CD8-positive, alpha-beta T cell (primary cell): ENCODE measurements at regions of chr1 and their contacts with region 1.

Region 1: GRCh38 chr1:22025368-22026155 is 24.1 kb downstream of the CELA3A start:
- DNase-seq: peak; percentile 69 to 95 (median 90)
- ATAC-seq: peak; percentile 65
- H3K4me3 ChIP-seq: peak overlapping the region; percentile 97 to 99
- H3K4me3 Mint-ChIP-seq: peak overlapping the region; percentile 95
- H3K27ac ChIP-seq: peak overlapping the region; percentile 99
- H3K27ac Mint-ChIP-seq: peak overlapping the region; percentile 98
- H3K4me1 ChIP-seq: peaks cover 37% of the 10 kb centered on the region
- H3K4me1 Mint-ChIP-seq: peaks cover 60% of the 10 kb centered on the region
- H3K27me3 ChIP-seq: no peaks in the 10 kb centered on the region
- H3K27me3 Mint-ChIP-seq: no peaks in the 10 kb centered on the region
- CTCF ChIP-seq: no peak

Region 2: DNA sequence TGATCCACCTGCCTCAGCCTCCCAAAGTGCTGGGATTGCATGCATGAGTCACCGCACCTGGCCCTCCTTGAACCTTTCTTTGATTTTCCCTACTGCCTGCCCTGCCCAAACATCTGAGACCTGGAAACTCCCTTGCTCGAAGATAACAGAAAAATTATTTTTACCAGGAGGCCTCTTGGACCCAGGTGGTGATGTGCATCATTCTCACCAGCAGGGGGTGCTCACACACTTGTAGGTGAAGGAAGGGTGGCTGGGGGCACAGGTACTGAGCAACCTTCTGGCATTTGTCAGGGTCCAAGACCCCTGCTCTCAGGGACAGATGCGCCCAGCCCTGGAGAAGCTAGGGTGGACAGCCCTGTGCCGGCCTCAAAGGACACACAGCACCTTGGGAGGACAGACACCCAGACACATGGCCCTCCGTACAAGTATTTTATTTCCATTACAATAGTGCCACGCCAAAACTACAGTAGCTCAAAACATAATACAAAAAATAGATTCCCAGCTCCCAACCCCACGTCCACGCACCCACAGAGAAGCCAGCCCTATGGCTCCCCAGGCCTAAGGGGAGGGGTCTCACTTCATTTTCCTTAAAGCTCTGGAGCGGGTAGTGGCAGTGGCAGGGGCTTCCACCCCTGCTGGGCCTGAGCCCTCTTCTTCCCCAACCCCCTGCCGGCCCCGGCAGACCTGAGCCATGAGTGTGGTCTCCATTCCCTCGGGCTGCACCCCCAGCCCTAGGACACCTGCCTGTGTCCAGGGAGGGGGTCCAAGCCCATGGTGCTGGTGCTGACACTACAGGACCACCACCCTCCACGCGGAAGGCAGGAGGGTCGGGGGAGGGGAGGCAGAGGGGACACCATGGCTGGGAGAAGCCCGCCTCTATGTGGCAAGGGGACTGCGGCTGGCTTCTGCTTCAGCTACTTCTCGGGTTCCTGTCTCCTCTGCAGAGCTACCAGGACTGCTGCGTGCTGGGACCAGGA is 808.4 kb before region 1 on chr1:
- CTCF ChIA-PET with region 1: no interaction called
- POLR2A ChIA-PET with region 1: no interaction called
- intact Hi-C with region 1: no loop called
- DNase-seq: peak; percentile 26 to 79 (median 70)
- ATAC-seq: peak; percentile 78
- H3K4me3 ChIP-seq: no peak overlapping the region
- H3K4me3 Mint-ChIP-seq: no peak overlapping the region
- H3K27ac ChIP-seq: no peak overlapping the region
- H3K27ac Mint-ChIP-seq: no peak overlapping the region
- H3K4me1 ChIP-seq: no peaks in the 10 kb centered on the region
- H3K4me1 Mint-ChIP-seq: peaks cover 2% of the 10 kb centered on the region
- H3K27me3 ChIP-seq: no peaks in the 10 kb centered on the region
- H3K27me3 Mint-ChIP-seq: no peaks in the 10 kb centered on the region
- CTCF ChIP-seq: peak; percentile 75

Region 3: DNA sequence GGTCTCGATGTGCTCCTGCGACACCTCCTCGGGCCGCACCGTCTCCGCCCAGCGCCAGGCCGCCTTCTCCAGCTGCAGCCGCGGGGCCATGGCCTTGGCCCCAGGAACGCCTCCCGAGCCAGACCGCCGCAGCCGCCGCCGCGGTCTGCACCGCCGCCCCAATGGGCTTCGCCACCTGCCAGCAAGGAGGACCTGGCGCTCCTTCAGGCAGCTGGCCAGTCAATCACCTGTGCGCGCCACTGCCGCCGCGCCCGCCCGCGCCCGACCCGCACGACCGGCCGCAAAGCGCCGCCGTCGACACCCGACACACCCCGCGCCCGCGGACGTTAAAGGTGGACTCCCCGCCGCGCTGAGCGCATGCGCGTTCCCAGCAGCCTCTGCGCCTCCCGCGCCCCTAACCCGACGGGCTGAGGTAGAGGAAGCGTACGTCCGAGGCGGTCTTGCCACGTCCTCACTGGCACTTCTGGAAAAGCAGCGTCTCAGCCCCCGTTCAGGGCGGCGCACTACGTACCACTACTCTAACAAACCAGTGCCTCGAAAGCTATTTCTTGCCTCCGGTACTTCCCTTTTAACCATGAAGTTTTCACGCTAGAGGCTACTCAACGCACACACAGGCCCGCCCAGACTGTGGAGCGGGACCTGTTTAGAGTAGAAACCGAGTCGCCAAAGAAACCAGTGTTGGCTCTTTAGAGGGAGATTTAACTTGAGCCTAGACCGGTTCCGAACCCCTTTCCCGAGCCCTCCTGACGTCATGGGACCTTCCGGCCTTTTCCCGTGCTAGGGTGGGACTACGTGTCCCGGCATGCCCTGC is 242.5 kb before region 1 on chr1 and contains the start of gene USP48:
- CTCF ChIA-PET with region 1: interaction called, 3 read pairs
- POLR2A ChIA-PET with region 1: interaction called, 17 read pairs
- intact Hi-C with region 1: loop called (anchors 1 kb)
- DNase-seq: peak; percentile 93 to 98 (median 96)
- ATAC-seq: peak; percentile 83
- H3K4me3 ChIP-seq: peak within 1 kb of the TSS; percentile 89 to 100
- H3K4me3 Mint-ChIP-seq: peak within 1 kb of the TSS; percentile 98
- H3K27ac ChIP-seq: peak within 1 kb of the TSS; percentile 100
- H3K27ac Mint-ChIP-seq: peak within 1 kb of the TSS; percentile 100
- H3K4me1 ChIP-seq: peaks cover 10% of the 10 kb centered on the region
- H3K4me1 Mint-ChIP-seq: peaks cover 31% of the 10 kb centered on the region
- H3K27me3 ChIP-seq: no peaks in the 10 kb centered on the region
- H3K27me3 Mint-ChIP-seq: no peaks in the 10 kb centered on the region
- CTCF ChIP-seq: no peak
- total RNA-seq, gene USP48: 58.7 to 68.3 TPM

Region 4: GRCh38 chr1:22039594-22040285 is 14.2 kb after region 1 on chr1:
- CTCF ChIA-PET with region 1: interaction called, 65 read pairs
- POLR2A ChIA-PET with region 1: interaction called, 108 read pairs
- intact Hi-C with region 1: loop called (anchors 1 kb)
- DNase-seq: peak; percentile 80 to 99 (median 90)
- ATAC-seq: peak; percentile 94
- H3K4me3 ChIP-seq: peak overlapping the region; percentile 40 to 46
- H3K4me3 Mint-ChIP-seq: peak overlapping the region; percentile 77
- H3K27ac ChIP-seq: peak overlapping the region; percentile 92 to 93
- H3K27ac Mint-ChIP-seq: peak overlapping the region; percentile 99
- H3K4me1 ChIP-seq: peaks cover 69% of the 10 kb centered on the region
- H3K4me1 Mint-ChIP-seq: peaks cover 56% of the 10 kb centered on the region
- H3K27me3 ChIP-seq: no peaks in the 10 kb centered on the region
- H3K27me3 Mint-ChIP-seq: no peaks in the 10 kb centered on the region
- CTCF ChIP-seq: no peak

Region 5: GRCh38 chr1:22064751-22065402 is 39.3 kb after region 1 on chr1:
- CTCF ChIA-PET with region 1: interaction called, 18 read pairs
- POLR2A ChIA-PET with region 1: interaction called, 177 read pairs
- intact Hi-C with region 1: no loop called
- DNase-seq: no peak
- ATAC-seq: no peak
- H3K4me3 ChIP-seq: no peak overlapping the region
- H3K4me3 Mint-ChIP-seq: peak overlapping the region; percentile 57
- H3K27ac ChIP-seq: peak overlapping the region in 1 of 2 experiments; percentile 26
- H3K27ac Mint-ChIP-seq: peak overlapping the region; percentile 87
- H3K4me1 ChIP-seq: peaks cover 90% of the 10 kb centered on the region
- H3K4me1 Mint-ChIP-seq: peaks cover 86% of the 10 kb centered on the region
- H3K27me3 ChIP-seq: no peaks in the 10 kb centered on the region
- H3K27me3 Mint-ChIP-seq: no peaks in the 10 kb centered on the region
- CTCF ChIP-seq: no peak

Region 6: GRCh38 chr1:22098752-22099151 is 73.2 kb after region 1 on chr1:
- CTCF ChIA-PET with region 1: interaction called, 12 read pairs
- POLR2A ChIA-PET with region 1: interaction called, 33 read pairs
- intact Hi-C with region 1: loop called in 1 of 2 experiments (anchors 5 kb)
- DNase-seq: no peak
- ATAC-seq: no peak
- H3K4me3 ChIP-seq: no peak overlapping the region
- H3K4me3 Mint-ChIP-seq: no peak overlapping the region
- H3K27ac ChIP-seq: no peak overlapping the region
- H3K27ac Mint-ChIP-seq: no peak overlapping the region
- H3K4me1 ChIP-seq: peaks cover 36% of the 10 kb centered on the region
- H3K4me1 Mint-ChIP-seq: peaks cover 66% of the 10 kb centered on the region
- H3K27me3 ChIP-seq: no peaks in the 10 kb centered on the region
- H3K27me3 Mint-ChIP-seq: no peaks in the 10 kb centered on the region
- CTCF ChIP-seq: no peak

Region 7: DNA sequence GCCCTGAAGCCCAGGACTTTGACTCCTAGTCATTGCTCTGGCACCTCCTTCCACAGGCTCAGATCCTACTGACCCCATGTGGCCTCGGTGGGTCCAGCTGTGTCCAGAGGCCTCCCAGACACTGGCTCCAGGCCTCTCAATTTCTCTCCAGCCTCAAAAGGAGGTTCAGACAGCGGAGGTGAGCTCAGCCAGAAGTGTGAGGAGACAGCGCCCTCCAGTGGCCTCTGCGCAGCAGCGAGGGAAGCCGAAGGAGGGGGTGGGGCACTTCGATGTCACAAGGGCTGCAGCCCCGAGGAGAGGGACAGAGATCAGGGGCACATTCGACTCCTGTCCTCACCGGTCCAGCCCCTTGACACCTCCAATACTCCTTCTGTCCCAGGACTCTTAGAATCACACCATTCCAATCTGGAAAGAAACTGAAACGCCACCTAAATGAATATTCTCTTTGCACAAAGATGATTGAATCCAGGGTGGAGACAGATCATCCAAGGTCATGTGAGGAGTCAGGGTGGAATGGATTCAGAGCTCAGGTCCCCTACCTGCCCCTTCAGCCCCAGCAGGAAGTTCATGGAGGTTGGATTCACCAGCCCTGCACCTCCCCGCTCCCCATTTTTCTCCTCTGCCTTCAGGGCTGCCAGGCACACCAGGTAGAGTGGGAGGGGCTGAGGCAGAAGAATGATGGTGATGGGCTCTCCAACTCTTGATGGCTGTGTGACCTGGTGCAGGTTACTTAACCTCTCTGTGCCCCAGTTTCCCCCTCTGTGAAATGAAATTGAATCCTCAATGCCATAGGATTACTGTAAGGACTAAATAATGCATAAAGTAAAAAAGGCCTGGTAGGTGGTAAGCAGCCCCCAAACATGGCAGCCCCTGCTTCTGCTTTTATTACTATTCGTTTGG is 391.2 kb after region 1 on chr1:
- CTCF ChIA-PET with region 1: interaction called, 3 read pairs
- POLR2A ChIA-PET with region 1: no interaction called
- intact Hi-C with region 1: loop called in 1 of 2 experiments (anchors 5 kb)
- DNase-seq: peak; percentile 42 to 83 (median 75)
- ATAC-seq: peak; percentile 87
- H3K4me3 ChIP-seq: no peak overlapping the region
- H3K4me3 Mint-ChIP-seq: no peak overlapping the region
- H3K27ac ChIP-seq: no peak overlapping the region
- H3K27ac Mint-ChIP-seq: no peak overlapping the region
- H3K4me1 ChIP-seq: peaks cover 5% of the 10 kb centered on the region
- H3K4me1 Mint-ChIP-seq: peaks cover 7% of the 10 kb centered on the region
- H3K27me3 ChIP-seq: peaks cover 4 to 9% of the 10 kb centered on the region in 2 experiments
- H3K27me3 Mint-ChIP-seq: peaks cover 41% of the 10 kb centered on the region
- CTCF ChIP-seq: peak; percentile 73